ENCODE measurements at regions of chr11 and their contacts with region 1.

Region 1: DNA sequence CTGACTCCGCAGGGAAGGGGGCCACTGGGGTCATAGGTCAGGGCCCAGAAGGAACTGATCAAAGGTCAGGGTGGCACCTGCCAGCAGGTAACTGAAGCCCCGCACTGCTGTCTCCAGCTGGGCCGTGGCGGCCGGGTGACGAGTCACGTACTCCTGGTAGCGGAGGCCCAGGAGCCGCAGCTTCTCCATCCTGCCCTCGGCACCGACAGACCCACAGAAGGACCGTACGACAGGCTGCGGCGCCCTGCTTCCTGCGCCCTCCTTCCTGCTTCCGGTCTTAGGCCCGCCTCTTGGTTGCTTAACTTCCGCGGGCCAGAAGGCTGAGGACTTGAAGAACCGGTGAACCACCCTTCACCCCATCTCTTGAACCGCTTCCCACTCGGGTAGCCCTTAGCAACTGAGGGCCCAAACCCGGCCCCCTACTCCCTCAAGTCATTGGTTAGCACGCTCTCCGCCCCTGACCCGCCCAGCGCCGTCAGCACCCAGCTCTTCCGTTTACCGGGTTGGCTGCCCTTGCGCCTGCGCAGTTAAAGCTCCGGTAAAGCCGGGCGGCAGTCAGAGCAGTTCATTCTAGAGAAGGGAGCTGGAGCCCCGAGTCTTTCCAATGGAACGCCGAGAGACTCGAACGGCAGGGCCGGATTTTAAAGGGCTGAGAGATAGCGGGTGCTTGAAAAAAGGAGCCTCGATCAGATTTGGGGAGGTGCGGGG is at the start of gene PEX16:
- DNase-seq: peak; percentile 98
- H3K4me3 Mint-ChIP-seq: peak within 1 kb of the TSS; percentile 96
- H3K27ac Mint-ChIP-seq: peak within 1 kb of the TSS; percentile 98
- H3K4me1 Mint-ChIP-seq: peaks cover 22% of the 10 kb centered on the region
- H3K27me3 Mint-ChIP-seq: peaks cover 7% of the 10 kb centered on the region
- total RNA-seq, gene PEX16: 30.8 and 38.5 TPM in 2 replicates

Region 2: GRCh38 chr11:45079943-45080719 is 837.6 kb before region 1 on chr11:
- intact Hi-C with region 1: no loop called
- DNase-seq: peak; percentile 38
- H3K4me3 Mint-ChIP-seq: no peak overlapping the region
- H3K27ac Mint-ChIP-seq: peak overlapping the region; percentile 40
- H3K4me1 Mint-ChIP-seq: peaks cover 18% of the 10 kb centered on the region
- H3K27me3 Mint-ChIP-seq: peaks cover 9% of the 10 kb centered on the region

Region 3: GRCh38 chr11:45163956-45164575 is 753.7 kb before region 1 on chr11:
- intact Hi-C with region 1: no loop called
- DNase-seq: no peak
- H3K4me3 Mint-ChIP-seq: no peak overlapping the region
- H3K27ac Mint-ChIP-seq: no peak overlapping the region
- H3K4me1 Mint-ChIP-seq: no peaks in the 10 kb centered on the region
- H3K27me3 Mint-ChIP-seq: peaks cover 2% of the 10 kb centered on the region

Region 4: GRCh38 chr11:45468262-45468856 is 449.4 kb before region 1 on chr11:
- intact Hi-C with region 1: no loop called
- DNase-seq: no peak
- H3K4me3 Mint-ChIP-seq: no peak overlapping the region
- H3K27ac Mint-ChIP-seq: no peak overlapping the region
- H3K4me1 Mint-ChIP-seq: no peaks in the 10 kb centered on the region
- H3K27me3 Mint-ChIP-seq: peaks cover 3% of the 10 kb centered on the region

Region 5: DNA sequence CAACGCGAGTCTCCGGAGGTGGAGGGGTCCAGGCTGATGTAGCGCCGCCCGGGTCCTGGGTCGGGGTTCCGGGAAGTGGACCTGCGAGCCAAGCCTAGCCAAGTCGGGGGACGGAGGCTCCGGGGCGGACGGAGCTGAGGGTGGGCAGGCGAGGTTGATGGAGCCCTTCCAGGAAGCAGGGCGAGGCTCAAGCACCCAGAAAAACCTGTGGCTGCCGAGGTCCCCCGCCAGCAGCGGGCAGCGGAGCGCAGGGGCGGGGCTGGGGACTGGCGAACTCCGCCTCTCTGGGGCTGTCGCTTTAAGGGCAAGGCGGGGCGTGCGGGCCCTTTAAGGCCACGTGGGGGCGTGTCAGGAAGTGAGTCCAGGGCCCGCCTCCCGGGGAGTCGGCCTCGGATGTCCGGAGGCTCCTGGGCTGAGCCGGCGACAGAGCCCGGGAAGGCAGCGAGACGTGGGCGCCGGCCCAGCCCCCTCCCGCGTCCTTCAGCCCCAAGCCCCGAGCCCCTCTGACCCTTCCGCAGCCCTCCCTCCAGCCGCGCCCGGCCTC is 112.9 kb before region 1 on chr11 and contains the start of gene SLC35C1:
- intact Hi-C with region 1: loop called (anchors 1 kb)
- DNase-seq: peak; percentile 95
- H3K4me3 Mint-ChIP-seq: peak within 1 kb of the TSS; percentile 90
- H3K27ac Mint-ChIP-seq: peak within 1 kb of the TSS; percentile 88
- H3K4me1 Mint-ChIP-seq: peaks cover 30% of the 10 kb centered on the region
- H3K27me3 Mint-ChIP-seq: no peaks in the 10 kb centered on the region
- total RNA-seq, gene SLC35C1: 17.1 and 18.1 TPM in 2 replicates

Region 6: DNA sequence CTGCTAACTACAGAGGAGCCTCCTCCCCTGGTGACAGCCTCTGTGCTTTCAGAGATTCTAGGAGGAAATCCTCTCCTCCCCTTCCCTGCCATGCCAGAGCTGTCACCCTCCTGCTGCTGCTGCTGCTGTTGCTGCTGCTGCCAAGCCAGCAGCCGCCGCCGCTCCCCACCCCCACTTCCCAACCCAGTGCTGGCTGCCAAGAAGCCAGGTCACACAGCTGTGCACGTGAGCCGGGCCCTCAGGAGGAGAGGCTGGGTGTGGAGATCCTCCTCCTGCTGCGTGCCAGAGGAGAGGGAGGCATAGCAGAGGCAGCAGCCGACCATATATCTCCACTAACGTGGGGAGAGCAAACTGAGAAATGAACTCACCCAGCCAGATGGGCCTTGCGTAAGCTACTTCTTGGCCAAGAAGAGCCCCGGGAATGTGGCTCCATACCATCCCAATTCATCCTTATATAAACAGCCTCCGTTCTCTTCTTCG is 58.1 kb before region 1 on chr11:
- intact Hi-C with region 1: no loop called
- DNase-seq: no peak
- H3K4me3 Mint-ChIP-seq: no peak overlapping the region
- H3K27ac Mint-ChIP-seq: no peak overlapping the region
- H3K4me1 Mint-ChIP-seq: no peaks in the 10 kb centered on the region
- H3K27me3 Mint-ChIP-seq: no peaks in the 10 kb centered on the region

Region 7: DNA sequence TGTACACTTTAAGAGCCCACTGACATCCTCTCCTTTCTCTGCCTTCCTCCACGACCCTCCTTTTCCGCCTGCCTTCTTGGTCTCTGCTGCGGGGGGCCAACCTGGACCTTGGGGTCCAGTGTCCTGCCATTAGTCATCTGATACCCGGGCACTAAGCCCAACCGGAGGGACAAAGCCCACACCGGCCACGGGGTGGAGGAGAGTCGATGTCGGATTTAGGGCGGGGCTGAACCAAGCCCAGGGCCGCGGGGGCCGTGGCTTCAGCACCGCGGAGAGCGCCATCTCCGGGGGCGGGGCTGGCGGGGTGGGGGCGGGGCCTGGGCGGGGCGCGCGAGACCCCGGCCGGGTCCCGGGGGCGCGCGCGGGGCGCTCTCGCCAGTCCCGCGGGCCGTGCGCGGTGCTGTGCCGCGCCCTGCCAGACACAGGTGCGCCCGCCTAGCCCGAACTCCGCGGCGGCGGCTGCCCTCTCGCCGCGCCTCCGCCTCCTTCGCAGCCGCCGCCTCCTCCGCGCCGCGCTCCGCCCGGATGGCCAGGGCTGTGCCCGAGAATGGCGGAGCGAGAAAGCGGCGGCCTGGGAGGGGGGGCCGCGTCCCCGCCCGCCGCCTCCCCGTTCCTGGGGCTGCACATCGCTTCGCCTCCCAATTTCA is 32.4 kb before region 1 on chr11 and contains the start of gene MAPK8IP1:
- intact Hi-C with region 1: loop called (anchors 1 kb)
- DNase-seq: peak; percentile 46
- H3K4me3 Mint-ChIP-seq: peak within 1 kb of the TSS; percentile 51
- H3K27ac Mint-ChIP-seq: no peak within 1 kb of the TSS
- H3K4me1 Mint-ChIP-seq: peaks cover 3% of the 10 kb centered on the region
- H3K27me3 Mint-ChIP-seq: peaks cover 8% of the 10 kb centered on the region
- total RNA-seq, gene MAPK8IP1: 0.46 and 0.66 TPM in 2 replicates

Measured in activated T-helper 2 cell treated with anti-CD3 and anti-CD28 coated beads, Interferon-gamma antibody, Interleukin-2, Interleukin-4, amounts not matched to agents 10 μg/mL and 5 μg/mL and 100 μg/mL, durations not matched to agents 14 hours and 24 hours and 36 hours (primary cell).